HepG2 (cell line): ENCODE measurements at regions of chr19 and their contacts with region 1.

Region 1: GRCh38 chr19:40221858-40222837 is 4.0 kb upstream of the TTC9B start:
- DNase-seq: peak; percentile 90
- ATAC-seq: peak; percentile 51
- H3K4me3 ChIP-seq: no peak overlapping the region
- H3K27ac ChIP-seq: no peak overlapping the region
- H3K4me1 ChIP-seq: peaks cover 26% of the 10 kb centered on the region
- H3K27me3 ChIP-seq: peaks cover 0 to 5% of the 10 kb centered on the region in 2 experiments; a peak in 1 of 5 replicates
- CTCF ChIP-seq: peak; percentile 87
- EP300 ChIP-seq: 0 out of 4 replicates have a peak, but pooled peaks of 1 of the 2 experiments have one; percentile 6
- POLR2A ChIP-seq: no peak
- RAD21 ChIP-seq: peak; percentile 69; the same call in 1 of the 2 replicates

Region 2: GRCh38 chr19:39858541-39858940 is 363.6 kb before region 1 on chr19:
- CTCF ChIA-PET with region 1: no interaction called
- POLR2A ChIA-PET with region 1: no interaction called
- in situ Hi-C with region 1: no loop called
- intact Hi-C with region 1: no loop called
- DNase-seq: peak; percentile 35
- ATAC-seq: peak; percentile 71
- H3K4me3 ChIP-seq: no peak overlapping the region
- H3K27ac ChIP-seq: no peak overlapping the region
- H3K4me1 ChIP-seq: no peaks in the 10 kb centered on the region
- H3K27me3 ChIP-seq: no peaks in the 10 kb centered on the region
- CTCF ChIP-seq: no peak
- EP300 ChIP-seq: no peak
- POLR2A ChIP-seq: no peak
- RAD21 ChIP-seq: no peak

Region 3: GRCh38 chr19:40139533-40140287 is 82.4 kb before region 1 on chr19:
- CTCF ChIA-PET with region 1: interaction called, 43 read pairs
- POLR2A ChIA-PET with region 1: no interaction called
- in situ Hi-C with region 1: loop called (anchors 5 kb)
- intact Hi-C with region 1: loop called (anchors 1 kb)
- DNase-seq: peak; percentile 35
- ATAC-seq: no peak
- H3K4me3 ChIP-seq: no peak overlapping the region
- H3K27ac ChIP-seq: no peak overlapping the region
- H3K4me1 ChIP-seq: no peaks in the 10 kb centered on the region
- H3K27me3 ChIP-seq: peaks cover 0 to 14% of the 10 kb centered on the region in 2 experiments; a peak in 2 of 5 replicates
- CTCF ChIP-seq: peak; percentile 85
- EP300 ChIP-seq: no peak
- POLR2A ChIP-seq: no peak
- RAD21 ChIP-seq: peak; percentile 81

Region 4: GRCh38 chr19:40155749-40156265 is 66.3 kb before region 1 on chr19:
- CTCF ChIA-PET with region 1: interaction called, 9 read pairs
- POLR2A ChIA-PET with region 1: no interaction called
- in situ Hi-C with region 1: no loop called
- intact Hi-C with region 1: loop called (anchors 1 kb)
- DNase-seq: peak; percentile 52
- ATAC-seq: peak; percentile 77
- H3K4me3 ChIP-seq: no peak overlapping the region
- H3K27ac ChIP-seq: no peak overlapping the region
- H3K4me1 ChIP-seq: peaks cover 42% of the 10 kb centered on the region
- H3K27me3 ChIP-seq: no peaks in the 10 kb centered on the region; a peak in 1 of 5 replicates
- CTCF ChIP-seq: peak; percentile 77
- EP300 ChIP-seq: no peak
- POLR2A ChIP-seq: no peak
- RAD21 ChIP-seq: peak; percentile 53